Activated B cell treated with CpG ODN at 0.5 μM for 24 hours (primary cell): ENCODE measurements at regions of chr5 and their contacts with region 1.

Region 1: DNA sequence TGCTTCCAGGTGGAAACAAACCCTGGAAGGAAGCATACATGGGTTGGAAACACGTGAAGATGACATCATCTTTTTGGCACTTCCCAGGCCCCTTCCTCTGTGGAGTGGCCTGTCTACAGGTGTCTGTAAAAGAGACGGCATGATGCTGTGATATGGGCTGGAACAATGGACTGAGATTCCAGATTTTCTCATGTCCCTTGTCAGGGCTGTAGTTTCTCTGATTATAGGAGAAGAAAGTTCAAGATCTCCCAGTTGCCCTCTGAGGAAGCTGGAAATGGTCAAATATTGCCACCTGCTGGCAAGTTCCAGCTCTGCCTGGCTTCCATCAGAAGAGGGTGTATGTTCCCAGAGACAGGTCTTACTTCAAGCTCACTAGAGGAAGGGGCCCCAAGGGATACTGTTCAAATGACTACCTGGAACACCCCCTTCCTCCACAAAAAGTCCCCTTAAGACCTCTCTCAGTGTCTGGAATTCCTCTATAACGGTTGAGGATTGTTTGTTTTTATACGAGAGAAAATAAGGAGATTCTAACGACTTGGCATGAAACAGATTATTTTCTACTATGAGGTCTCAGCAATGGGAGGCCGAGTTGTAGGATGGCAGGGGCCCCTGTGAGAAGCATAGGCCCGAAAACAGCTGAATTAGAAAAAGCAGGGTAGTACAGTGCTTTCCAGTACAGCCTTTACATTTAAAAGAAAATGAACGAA is 7.3 kb upstream of the ANXA6 start:
- DNase-seq: peak; percentile 59
- ATAC-seq: peak; percentile 97
- H3K4me3 Mint-ChIP-seq: no peak overlapping the region
- H3K27ac Mint-ChIP-seq: peak overlapping the region; percentile 65
- H3K4me1 Mint-ChIP-seq: peaks cover 39% of the 10 kb centered on the region
- H3K27me3 Mint-ChIP-seq: no peaks in the 10 kb centered on the region
- CTCF ChIP-seq: peak; percentile 72

Region 2: GRCh38 chr5:150801117-150801927 is 363.5 kb before region 1 on chr5:
- CTCF ChIA-PET with region 1: interaction called, 13 read pairs
- POLR2A ChIA-PET with region 1: no interaction called
- intact Hi-C with region 1: loop called (anchors 1 kb)
- DNase-seq: no peak
- ATAC-seq: no peak
- H3K4me3 Mint-ChIP-seq: no peak overlapping the region
- H3K27ac Mint-ChIP-seq: no peak overlapping the region
- H3K4me1 Mint-ChIP-seq: no peaks in the 10 kb centered on the region
- H3K27me3 Mint-ChIP-seq: peaks cover 18% of the 10 kb centered on the region
- CTCF ChIP-seq: no peak

Region 3: GRCh38 chr5:151051066-151051930 is 113.5 kb before region 1 on chr5:
- CTCF ChIA-PET with region 1: interaction called, 156 read pairs
- POLR2A ChIA-PET with region 1: interaction called, 6 read pairs
- intact Hi-C with region 1: loop called (anchors 1 kb)
- DNase-seq: peak; percentile 59
- ATAC-seq: peak; percentile 89
- H3K4me3 Mint-ChIP-seq: no peak overlapping the region
- H3K27ac Mint-ChIP-seq: peak overlapping the region; percentile 76
- H3K4me1 Mint-ChIP-seq: peaks cover 37% of the 10 kb centered on the region
- H3K27me3 Mint-ChIP-seq: no peaks in the 10 kb centered on the region
- CTCF ChIP-seq: peak; percentile 41

Region 4: DNA sequence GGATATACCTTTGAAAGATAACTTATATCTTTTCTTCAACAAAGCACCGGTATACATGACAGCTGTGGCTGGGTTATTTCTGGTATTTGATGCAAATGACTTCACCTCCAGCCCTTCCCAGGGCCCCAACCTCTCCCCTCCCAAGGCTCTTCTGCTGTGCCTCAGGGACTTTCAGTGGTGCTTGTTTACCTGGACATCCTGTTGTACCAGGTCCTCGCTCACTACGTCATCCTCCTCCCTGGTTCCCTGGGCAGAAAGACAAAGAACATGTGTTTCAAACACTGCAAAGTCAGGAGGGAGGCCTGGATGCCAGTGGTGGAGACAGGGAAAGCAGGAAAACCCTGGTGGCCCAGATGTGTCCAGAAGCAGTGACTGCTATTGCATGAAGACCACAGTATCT is 30.6 kb before region 1 on chr5:
- CTCF ChIA-PET with region 1: interaction called, 309 read pairs
- POLR2A ChIA-PET with region 1: interaction called, 7 read pairs
- intact Hi-C with region 1: no loop called
- DNase-seq: no peak
- ATAC-seq: peak; percentile 23
- H3K4me3 Mint-ChIP-seq: peak overlapping the region; percentile 45
- H3K27ac Mint-ChIP-seq: peak overlapping the region; percentile 83
- H3K4me1 Mint-ChIP-seq: peaks cover 83% of the 10 kb centered on the region
- H3K27me3 Mint-ChIP-seq: no peaks in the 10 kb centered on the region
- CTCF ChIP-seq: no peak

Region 5: GRCh38 chr5:151191659-151192058 is 26.8 kb after region 1 on chr5:
- CTCF ChIA-PET with region 1: interaction called, 13 read pairs
- POLR2A ChIA-PET with region 1: no interaction called
- intact Hi-C with region 1: no loop called
- DNase-seq: no peak
- ATAC-seq: no peak
- H3K4me3 Mint-ChIP-seq: peak overlapping the region; percentile 46
- H3K27ac Mint-ChIP-seq: peak overlapping the region; percentile 76
- H3K4me1 Mint-ChIP-seq: peaks cover 80% of the 10 kb centered on the region
- H3K27me3 Mint-ChIP-seq: no peaks in the 10 kb centered on the region
- CTCF ChIP-seq: no peak

Region 6: DNA sequence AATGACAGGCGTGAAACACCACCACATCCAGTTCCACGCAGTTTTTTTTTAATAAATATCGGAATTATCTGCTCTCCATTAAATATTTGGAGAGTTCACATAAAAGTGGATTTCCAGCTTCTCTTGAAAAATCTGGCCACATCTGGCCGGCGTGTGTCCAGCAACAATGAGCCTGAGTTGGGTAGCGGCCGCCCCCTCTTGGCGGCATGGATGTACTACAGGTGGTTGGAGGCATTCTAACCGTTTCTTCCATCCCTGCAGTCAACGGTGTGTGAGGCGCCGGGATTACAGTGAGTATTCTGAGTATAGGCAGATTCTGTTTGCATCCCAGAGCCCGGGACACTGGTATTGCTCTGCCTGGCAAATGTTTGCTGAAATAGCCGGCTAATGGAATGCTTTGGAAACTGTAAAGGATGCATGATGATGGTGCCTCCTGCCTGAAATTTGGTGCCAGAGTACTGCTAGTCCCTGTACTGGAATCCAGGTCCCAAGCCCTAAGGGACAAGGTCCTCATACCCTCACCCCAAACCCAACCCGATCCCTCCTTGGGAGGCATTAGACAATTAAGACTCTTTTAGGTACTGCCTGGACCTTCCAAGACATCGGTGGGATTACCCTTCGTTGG is 74.5 kb after region 1 on chr5:
- CTCF ChIA-PET with region 1: interaction called, 122 read pairs
- POLR2A ChIA-PET with region 1: interaction called, 12 read pairs
- intact Hi-C with region 1: loop called (anchors 1 kb)
- DNase-seq: peak; percentile 58
- ATAC-seq: peak; percentile 60
- H3K4me3 Mint-ChIP-seq: peak overlapping the region; percentile 77
- H3K27ac Mint-ChIP-seq: peak overlapping the region; percentile 72
- H3K4me1 Mint-ChIP-seq: peaks cover 95% of the 10 kb centered on the region
- H3K27me3 Mint-ChIP-seq: no peaks in the 10 kb centered on the region
- CTCF ChIP-seq: peak; percentile 85